Lower leg skin (tissue), 4 donors: ENCODE measurements at regions of chr9 and their contacts with region 1.

Region 1: GRCh38 chr9:91727316-91727861 is 222.6 kb downstream of the ROR2 start:
- DNase-seq: peak in 1 of 2 donors; percentile 70
- H3K4me3 ChIP-seq: no peak overlapping the region
- CTCF ChIP-seq: peak in 1 of 3 donors; percentile 37
- POLR2A ChIP-seq: no peak

Region 2: GRCh38 chr9:90914868-90915483 is 812.4 kb before region 1 on chr9:
- intact Hi-C with region 1: loop called (anchors 5 kb)
- DNase-seq: peak in 1 of 2 donors; percentile 32
- H3K4me3 ChIP-seq: no peak overlapping the region
- CTCF ChIP-seq: peak in 2 of 3 donors; percentile 51 to 93
- POLR2A ChIP-seq: no peak

Region 3: DNA sequence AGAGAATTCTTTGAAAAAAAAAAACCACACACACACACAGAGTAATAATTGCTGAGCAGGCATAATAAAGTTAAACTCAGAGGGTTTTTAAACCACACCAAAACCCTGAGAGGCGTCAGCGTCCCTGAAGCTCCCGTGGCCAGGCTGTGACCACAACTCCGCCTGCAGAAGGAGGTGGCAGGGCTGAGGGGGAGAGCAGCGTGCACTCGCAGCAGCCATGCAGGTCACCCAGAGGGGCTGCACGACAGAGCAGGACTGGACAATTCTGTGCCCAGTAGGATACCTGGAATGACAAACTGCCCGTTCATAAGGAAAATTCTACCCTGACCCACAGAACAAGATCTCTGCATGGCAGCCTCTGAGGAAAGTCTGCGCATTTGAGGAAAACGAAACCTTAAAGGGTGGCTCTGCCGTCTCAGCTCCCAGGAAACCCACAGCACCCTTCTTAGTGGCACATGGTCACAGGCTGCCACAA is 178.6 kb after region 1 on chr9:
- intact Hi-C with region 1: no loop called
- DNase-seq: peak in 1 of 2 donors; percentile 74
- H3K4me3 ChIP-seq: no peak overlapping the region
- CTCF ChIP-seq: no peak
- POLR2A ChIP-seq: no peak